Activated CD4-positive, alpha-beta memory T cell treated with anti-CD3 and anti-CD28 coated beads for 36 hours (primary cell): ENCODE measurements at regions of chr12 and their contacts with region 1.

Region 1: GRCh38 chr12:47307680-47308399 is 228.1 kb upstream of the AMIGO2 start:
- DNase-seq: peak; percentile 68
- H3K4me3 Mint-ChIP-seq: peak overlapping the region; percentile 82
- H3K27ac Mint-ChIP-seq: peak overlapping the region; percentile 90
- H3K4me1 Mint-ChIP-seq: peaks cover 75% of the 10 kb centered on the region
- H3K27me3 Mint-ChIP-seq: no peaks in the 10 kb centered on the region

Region 2: DNA sequence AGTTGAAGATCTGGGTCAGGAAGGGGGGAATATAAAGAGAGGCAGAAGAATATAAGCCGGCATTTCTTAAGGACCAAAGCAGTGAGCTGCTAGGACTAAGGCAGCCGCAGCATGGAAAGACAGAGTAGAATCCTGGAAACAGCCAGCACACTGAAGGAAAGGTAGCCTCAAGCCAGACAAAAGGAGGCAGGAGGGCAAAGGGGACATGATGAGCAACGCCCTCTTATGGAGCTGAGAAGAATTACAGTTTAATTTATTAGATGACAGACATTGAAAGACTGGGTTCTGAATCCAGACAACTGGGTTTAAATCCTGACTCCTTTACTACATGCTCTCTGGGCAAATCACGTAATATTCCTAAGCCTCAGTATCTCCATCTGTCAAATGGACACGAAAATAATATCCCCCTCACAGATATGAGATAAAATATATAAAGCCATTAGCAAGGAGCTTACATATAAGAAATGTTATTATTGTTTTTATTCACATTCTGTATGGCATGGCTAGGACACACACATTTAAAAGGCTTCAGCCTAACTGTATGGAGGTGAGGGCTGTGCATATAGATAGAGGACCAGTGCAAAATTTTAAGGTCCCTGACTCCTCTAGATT is 236.5 kb before region 1 on chr12:
- CTCF ChIA-PET with region 1: interaction called, 11 read pairs
- POLR2A ChIA-PET with region 1: interaction called, 3 read pairs
- intact Hi-C with region 1: no loop called
- DNase-seq: no peak
- H3K4me3 Mint-ChIP-seq: no peak overlapping the region
- H3K27ac Mint-ChIP-seq: no peak overlapping the region
- H3K4me1 Mint-ChIP-seq: peaks cover 21% of the 10 kb centered on the region
- H3K27me3 Mint-ChIP-seq: no peaks in the 10 kb centered on the region

Region 3: DNA sequence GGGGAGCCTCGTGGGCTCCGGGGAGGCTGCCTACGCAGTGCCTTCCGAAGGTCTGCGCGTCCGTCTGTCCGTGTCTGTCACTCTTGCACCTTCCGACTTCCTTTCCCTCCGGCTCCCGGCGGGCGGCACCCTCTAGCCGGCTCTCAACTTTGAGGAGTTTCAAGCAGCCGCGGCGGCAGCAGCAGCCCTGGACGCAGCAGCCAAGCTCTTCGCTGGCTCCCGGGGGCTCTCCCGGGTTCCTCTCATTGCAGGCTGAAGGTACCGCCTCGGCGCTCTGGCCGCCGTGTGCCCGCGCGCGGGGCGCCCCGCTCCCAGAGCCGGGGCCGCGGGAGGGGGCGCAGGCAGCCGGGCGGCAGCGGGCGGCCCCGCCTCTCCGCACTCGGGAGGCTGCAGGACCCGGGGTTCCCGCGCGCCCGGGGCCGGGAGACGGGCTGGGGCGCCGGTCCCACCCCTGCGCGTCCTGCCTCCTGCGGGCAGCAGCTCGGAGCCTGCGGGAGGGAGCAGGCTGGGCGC is 228.3 kb before region 1 on chr12 and contains the starts of genes AMIGO2 and PCED1B:
- CTCF ChIA-PET with region 1: interaction called, 12 read pairs
- POLR2A ChIA-PET with region 1: interaction called, 5 read pairs
- intact Hi-C with region 1: loop called (anchors 1 kb)
- DNase-seq: peak; percentile 83
- H3K4me3 Mint-ChIP-seq: peak within 1 kb of the TSS; percentile 99
- H3K27ac Mint-ChIP-seq: peak within 1 kb of the TSS; percentile 92
- H3K4me1 Mint-ChIP-seq: peaks cover 72% of the 10 kb centered on the region
- H3K27me3 Mint-ChIP-seq: no peaks in the 10 kb centered on the region
- total RNA-seq, gene AMIGO2: 12.4 to 13.6 TPM
- total RNA-seq, gene PCED1B: 133 to 136 TPM

Region 4: GRCh38 chr12:47223848-47224213 is 84.0 kb before region 1 on chr12:
- CTCF ChIA-PET with region 1: interaction called, 3 read pairs
- POLR2A ChIA-PET with region 1: interaction called, 44 read pairs
- intact Hi-C with region 1: loop called (anchors 2 kb)
- DNase-seq: no peak
- H3K4me3 Mint-ChIP-seq: peak overlapping the region; percentile 70
- H3K27ac Mint-ChIP-seq: peak overlapping the region; percentile 87
- H3K4me1 Mint-ChIP-seq: peaks cover 68% of the 10 kb centered on the region
- H3K27me3 Mint-ChIP-seq: no peaks in the 10 kb centered on the region

Region 5: GRCh38 chr12:47276621-47277309 is 31.1 kb before region 1 on chr12:
- CTCF ChIA-PET with region 1: interaction called, 4 read pairs
- POLR2A ChIA-PET with region 1: interaction called, 4 read pairs
- intact Hi-C with region 1: loop called (anchors 1 kb)
- DNase-seq: peak; percentile 70
- H3K4me3 Mint-ChIP-seq: peak overlapping the region; percentile 33
- H3K27ac Mint-ChIP-seq: peak overlapping the region; percentile 95
- H3K4me1 Mint-ChIP-seq: peaks cover 82% of the 10 kb centered on the region
- H3K27me3 Mint-ChIP-seq: no peaks in the 10 kb centered on the region

Region 6: DNA sequence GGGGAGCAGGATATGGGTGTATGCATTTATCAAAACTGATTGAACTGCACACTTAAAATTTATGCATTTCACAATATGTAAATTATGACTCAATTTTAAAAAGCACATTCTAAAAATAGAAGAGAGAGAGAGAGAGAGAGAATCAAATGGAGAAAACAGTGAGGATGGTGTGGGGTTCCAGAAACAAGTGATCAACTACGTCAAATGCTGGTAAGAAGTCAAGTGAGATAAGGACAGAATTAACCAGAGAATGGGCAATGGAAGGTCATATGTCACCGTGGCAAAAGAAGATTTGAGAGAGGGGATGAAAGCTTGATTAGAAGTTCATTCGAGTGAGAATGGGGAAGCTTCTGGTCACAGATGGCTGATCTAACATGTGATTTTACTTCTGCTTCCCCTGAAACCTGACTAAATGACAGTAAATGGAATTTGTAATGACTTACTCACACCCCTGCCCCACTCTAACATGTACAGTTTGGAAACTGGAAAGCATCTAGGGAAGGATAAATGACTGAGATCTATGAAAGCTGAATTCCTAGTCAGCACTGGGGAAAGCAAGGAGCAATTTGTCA is 48.4 kb after region 1 on chr12:
- CTCF ChIA-PET with region 1: interaction called, 4 read pairs
- POLR2A ChIA-PET with region 1: interaction called, 6 read pairs
- intact Hi-C with region 1: loop called (anchors 1 kb)
- DNase-seq: peak; percentile 50
- H3K4me3 Mint-ChIP-seq: peak overlapping the region; percentile 66
- H3K27ac Mint-ChIP-seq: peak overlapping the region; percentile 99
- H3K4me1 Mint-ChIP-seq: peaks cover 76% of the 10 kb centered on the region
- H3K27me3 Mint-ChIP-seq: no peaks in the 10 kb centered on the region

Region 7: DNA sequence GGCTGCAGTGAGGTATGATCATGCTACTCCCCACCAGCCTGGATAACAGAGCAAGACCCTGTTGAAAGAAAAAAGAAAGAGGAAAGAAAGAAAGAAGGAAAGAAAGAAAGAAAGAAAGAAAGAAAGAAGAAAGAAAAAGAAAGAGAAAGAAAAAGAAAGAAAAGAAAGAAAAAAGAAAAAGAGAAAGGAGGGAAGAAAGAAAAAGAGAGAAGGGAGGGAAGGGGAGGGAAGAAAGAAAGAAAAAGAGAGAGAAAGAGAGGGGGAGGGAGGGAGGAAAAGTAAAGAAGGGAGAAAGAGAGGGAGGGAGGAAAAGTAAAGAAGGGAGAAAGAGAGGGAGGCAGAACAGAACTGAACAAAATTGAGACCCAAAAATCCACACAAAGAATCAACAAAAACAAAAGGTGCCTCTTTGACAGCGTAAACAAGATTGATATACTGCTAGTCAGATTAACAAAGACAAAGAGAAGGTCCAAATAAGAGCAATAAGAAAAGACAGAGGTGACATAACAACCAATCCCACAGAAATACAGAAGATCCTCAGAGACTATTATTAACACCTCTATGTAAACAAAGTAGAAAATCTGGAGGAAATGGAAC is 65.8 kb after region 1 on chr12:
- CTCF ChIA-PET with region 1: no interaction called
- POLR2A ChIA-PET with region 1: no interaction called
- intact Hi-C with region 1: no loop called
- DNase-seq: no peak
- H3K4me3 Mint-ChIP-seq: no peak overlapping the region
- H3K27ac Mint-ChIP-seq: no peak overlapping the region
- H3K4me1 Mint-ChIP-seq: peaks cover 36% of the 10 kb centered on the region
- H3K27me3 Mint-ChIP-seq: no peaks in the 10 kb centered on the region